ENCODE measurements at regions of chr13 and their contacts with region 1.

Region 1: GRCh38 chr13:53041968-53042516 is 13.4 kb downstream of the OLFM4 start:
- DNase-seq: no peak
- ATAC-seq: no peak

Region 2: GRCh38 chr13:51581116-51581820 is 1460.8 kb before region 1 on chr13:
- intact Hi-C with region 1: no loop called
- DNase-seq: no peak
- ATAC-seq: no peak

Region 3: DNA sequence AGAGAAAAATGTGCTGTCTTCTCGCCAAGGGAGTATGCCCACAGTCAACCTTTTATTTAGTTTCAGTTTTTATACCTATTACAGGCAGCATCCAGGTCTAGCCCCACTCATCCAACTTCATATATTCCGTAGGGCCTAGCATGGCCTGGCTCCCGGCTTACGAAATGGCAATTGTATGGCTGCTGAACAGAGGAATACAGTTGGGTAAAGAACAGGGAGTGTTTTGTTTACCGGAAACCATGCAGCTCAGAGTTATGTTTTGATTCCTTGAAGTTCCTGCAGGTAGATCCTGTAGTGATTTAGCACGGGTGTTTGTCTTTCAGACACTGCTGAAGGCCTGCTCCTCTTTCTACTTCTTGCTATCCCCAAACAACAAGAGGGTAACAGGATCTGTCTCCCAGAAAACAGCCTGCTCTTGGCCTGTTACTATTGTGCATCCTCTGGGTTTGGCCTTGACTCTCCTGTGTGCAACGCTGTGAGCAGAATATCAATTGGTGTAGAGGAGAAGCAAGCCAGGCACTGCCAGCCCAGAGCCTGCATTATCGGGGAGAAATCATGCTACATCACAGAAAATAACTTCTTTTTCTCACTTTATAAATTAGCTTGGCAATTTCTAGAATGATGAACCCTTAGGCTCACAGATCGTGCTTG is 18.9 kb after region 1 on chr13:
- intact Hi-C with region 1: loop called in 1 of 2 experiments (anchors 2 kb)
- DNase-seq: peak in 1 of 2 donors; percentile 20
- ATAC-seq: peak; percentile 95